A549 (cell line): ENCODE measurements at regions of chr2 and their contacts with region 1.

Region 1: DNA sequence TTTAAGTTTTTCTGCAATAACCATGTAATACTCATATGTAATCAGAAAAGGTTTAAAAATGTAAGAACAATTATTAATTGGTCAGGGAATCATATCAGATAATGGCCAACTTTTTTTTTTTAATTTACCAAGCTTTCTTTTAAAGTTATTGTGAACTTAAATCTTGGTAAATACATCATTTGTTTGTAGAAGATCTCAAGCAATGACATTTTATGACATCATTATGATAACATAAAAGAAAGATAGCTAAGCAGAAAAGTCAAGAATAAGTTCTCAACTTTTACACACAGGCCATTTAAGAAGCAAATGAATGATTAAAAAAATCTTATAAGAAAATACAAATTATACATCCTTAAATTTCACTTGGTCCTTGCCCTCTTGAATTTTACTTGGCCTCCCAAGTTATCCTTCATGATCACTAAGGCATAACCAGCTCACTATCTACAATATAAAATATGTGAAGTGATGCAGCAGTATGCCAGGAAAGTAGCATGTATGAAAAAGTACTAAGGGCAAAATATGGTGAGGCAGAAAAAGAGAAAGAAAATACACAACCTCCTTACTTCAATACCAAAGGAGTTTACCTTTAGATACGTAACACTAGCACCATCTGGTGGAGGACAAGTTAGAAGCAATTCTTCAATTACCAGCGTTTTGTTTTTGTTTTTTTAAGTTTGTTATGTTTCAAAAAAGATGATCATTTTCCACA is 116.6 kb downstream of the SRBD1 start:
- DNase-seq: peak; percentile 34 to 79
- ATAC-seq: peak; percentile 59 to 63; a peak in 5 of 6 replicates
- H3K4me3 ChIP-seq: no peak overlapping the region
- H3K27ac ChIP-seq: no peak overlapping the region; a peak in 1 of 6 replicates
- H3K4me1 ChIP-seq: peaks cover 2% of the 10 kb centered on the region; the same call in 1 of the 3 replicates
- CTCF ChIP-seq: peak; percentile 97
- EP300 ChIP-seq: no peak; a peak in 1 of 5 replicates
- POLR2A ChIP-seq: no peak
- RAD21 ChIP-seq: peak; percentile 96 to 97

Region 2: GRCh38 chr2:44974064-44974715 is 520.2 kb before region 1 on chr2:
- CTCF ChIA-PET with region 1: interaction called, 305 read pairs
- POLR2A ChIA-PET with region 1: no interaction called
- DNase-seq: peak; percentile 77 to 79
- ATAC-seq: peak; percentile 73 to 90; a peak in 5 of 6 replicates
- H3K4me3 ChIP-seq: no peak overlapping the region
- H3K27ac ChIP-seq: no peak overlapping the region; a peak in 1 of 6 replicates
- H3K4me1 ChIP-seq: peaks cover 8% of the 10 kb centered on the region; the same call in 1 of the 3 replicates
- CTCF ChIP-seq: peak; percentile 64
- EP300 ChIP-seq: no peak
- POLR2A ChIP-seq: no peak
- RAD21 ChIP-seq: peak; percentile 70 to 86

Region 3: GRCh38 chr2:44987036-44987435 is 507.4 kb before region 1 on chr2:
- CTCF ChIA-PET with region 1: interaction called, 305 read pairs
- POLR2A ChIA-PET with region 1: no interaction called
- DNase-seq: no peak
- ATAC-seq: no peak
- H3K4me3 ChIP-seq: no peak overlapping the region
- H3K27ac ChIP-seq: no peak overlapping the region
- H3K4me1 ChIP-seq: no peaks in the 10 kb centered on the region
- CTCF ChIP-seq: no peak
- EP300 ChIP-seq: no peak
- POLR2A ChIP-seq: no peak
- RAD21 ChIP-seq: no peak

Region 4: DNA sequence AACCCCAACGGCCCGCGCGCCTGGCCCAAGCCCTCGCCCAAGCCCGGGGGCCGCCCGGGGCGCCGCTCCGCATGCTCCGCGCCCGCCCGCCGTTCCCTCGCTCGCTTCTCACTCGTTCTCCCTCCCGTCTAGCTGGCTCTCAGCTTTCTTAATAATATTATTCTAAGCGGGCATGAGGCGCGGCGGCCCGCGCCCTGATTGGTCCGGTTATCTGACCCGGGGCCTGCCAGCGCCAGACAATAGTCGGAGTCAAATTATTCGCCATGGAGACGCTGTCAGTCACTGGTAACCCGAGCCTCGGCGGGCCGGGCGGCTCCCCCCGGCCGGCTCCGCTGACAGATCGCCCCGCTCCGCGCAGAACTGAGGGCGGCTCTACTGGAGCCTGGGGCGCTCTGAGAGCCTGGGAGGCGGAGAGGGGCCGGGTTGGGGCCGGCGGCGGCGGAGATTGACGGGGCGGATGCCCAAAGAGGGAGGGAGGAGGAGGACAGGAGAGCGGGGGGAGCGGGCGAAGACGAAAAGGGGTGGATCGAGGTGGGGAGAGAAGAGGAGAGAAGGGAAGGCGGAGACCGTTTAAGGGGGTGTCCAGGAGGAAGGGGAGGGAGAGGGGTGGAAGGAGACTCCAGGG is 485.0 kb before region 1 on chr2 and contains the start of gene SIX2:
- CTCF ChIA-PET with region 1: interaction called, 35 read pairs
- POLR2A ChIA-PET with region 1: no interaction called
- DNase-seq: peak; percentile 78 to 81
- ATAC-seq: peak; percentile 55 to 80
- H3K4me3 ChIP-seq: peak within 1 kb of the TSS; percentile 65
- H3K27ac ChIP-seq: peak within 1 kb of the TSS; percentile 59 to 76
- H3K4me1 ChIP-seq: peaks cover 9% of the 10 kb centered on the region; the same call in 2 of the 3 replicates
- CTCF ChIP-seq: no peak
- EP300 ChIP-seq: no peak
- POLR2A ChIP-seq: no peak
- RAD21 ChIP-seq: no peak
- polyA plus RNA-seq, gene SIX2: 0.10 and 0.13 TPM in 2 replicates

Region 5: DNA sequence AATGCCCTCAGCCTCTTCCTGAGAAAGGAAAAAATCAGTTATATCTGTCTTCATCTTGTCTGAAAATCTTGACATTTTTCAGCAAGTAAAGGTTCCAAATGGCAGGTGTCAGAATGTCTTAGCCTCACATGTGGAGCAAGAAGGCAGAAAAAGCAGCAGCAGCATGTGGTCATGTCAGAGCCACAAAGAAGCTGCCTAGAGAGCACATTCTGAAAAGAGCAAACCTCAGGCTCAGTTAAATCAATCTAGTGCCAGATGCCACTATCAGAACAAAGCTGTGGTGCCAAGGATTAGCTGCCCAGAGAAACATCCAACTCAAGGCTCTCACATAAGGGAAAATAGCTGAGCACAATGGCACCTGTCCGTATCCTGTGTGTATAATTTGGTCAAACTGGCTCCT is 10.7 kb after region 1 on chr2:
- CTCF ChIA-PET with region 1: interaction called, 33 read pairs
- POLR2A ChIA-PET with region 1: no interaction called
- DNase-seq: no peak
- ATAC-seq: no peak
- H3K4me3 ChIP-seq: no peak overlapping the region
- H3K27ac ChIP-seq: no peak overlapping the region
- H3K4me1 ChIP-seq: no peaks in the 10 kb centered on the region
- CTCF ChIP-seq: no peak
- EP300 ChIP-seq: no peak
- POLR2A ChIP-seq: no peak
- RAD21 ChIP-seq: no peak